ENCODE measurements at regions of chr2 and their contacts with region 1.

Region 1: GRCh38 chr2:196337208-196337953 is 166.0 kb upstream of the STK17B start:
- DNase-seq: peak; percentile 34
- ATAC-seq: peak; percentile 39
- H3K4me3 Mint-ChIP-seq: no peak overlapping the region
- H3K27ac Mint-ChIP-seq: no peak overlapping the region
- H3K4me1 Mint-ChIP-seq: peaks cover 4% of the 10 kb centered on the region
- H3K27me3 Mint-ChIP-seq: peaks cover 7% of the 10 kb centered on the region

Region 2: GRCh38 chr2:196068271-196069209 is 268.8 kb before region 1 on chr2 and contains the start of gene DNAH7:
- CTCF ChIA-PET with region 1: interaction called, 29 read pairs
- POLR2A ChIA-PET with region 1: no interaction called
- DNase-seq: peak; percentile 96
- ATAC-seq: peak; percentile 96
- H3K4me3 Mint-ChIP-seq: peak within 1 kb of the TSS; percentile 79
- H3K27ac Mint-ChIP-seq: peak within 1 kb of the TSS; percentile 75
- H3K4me1 Mint-ChIP-seq: peaks cover 19% of the 10 kb centered on the region
- H3K27me3 Mint-ChIP-seq: peaks cover 16% of the 10 kb centered on the region
- total RNA-seq, gene DNAH7: not detected

Region 3: DNA sequence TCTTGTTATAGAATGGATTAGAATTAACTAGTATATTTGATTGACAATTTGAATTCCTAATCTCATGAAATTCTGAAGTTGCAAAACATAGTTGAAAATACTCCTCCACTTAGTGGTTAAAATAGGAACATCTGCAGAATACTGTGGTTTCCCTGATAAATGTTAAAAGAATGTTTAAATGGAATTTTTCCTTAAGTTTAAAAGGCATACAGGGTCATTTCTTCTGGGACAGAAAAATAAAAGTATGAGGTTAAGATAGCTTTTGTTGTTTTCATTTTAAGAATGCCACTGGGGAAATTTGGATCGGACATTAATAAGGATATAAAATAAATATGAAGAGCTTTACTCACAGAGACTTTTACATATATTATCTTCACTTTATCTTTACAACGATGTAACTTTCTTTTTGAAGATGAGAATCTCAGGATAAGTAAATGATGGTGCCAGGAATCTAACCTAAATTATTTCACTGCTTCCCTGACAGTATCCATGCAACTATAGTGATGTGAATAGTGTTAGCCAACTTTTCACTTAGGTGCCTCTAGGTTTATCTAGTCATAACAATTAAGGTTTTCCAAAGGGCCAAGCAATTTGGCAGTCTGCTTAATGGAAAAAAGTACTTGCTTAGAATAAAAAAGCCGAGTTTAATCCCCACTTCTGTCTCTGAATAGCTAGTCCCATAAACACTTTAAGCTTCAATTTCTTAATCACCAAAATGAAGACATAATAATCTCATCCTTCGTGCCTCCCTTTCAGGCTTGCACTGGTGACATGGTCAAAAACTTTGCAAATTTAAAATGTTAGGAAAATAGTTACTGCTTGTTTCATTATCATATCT is 14.2 kb before region 1 on chr2:
- CTCF ChIA-PET with region 1: interaction called, 20 read pairs
- POLR2A ChIA-PET with region 1: no interaction called
- DNase-seq: no peak
- ATAC-seq: no peak
- H3K4me3 Mint-ChIP-seq: no peak overlapping the region
- H3K27ac Mint-ChIP-seq: no peak overlapping the region
- H3K4me1 Mint-ChIP-seq: no peaks in the 10 kb centered on the region
- H3K27me3 Mint-ChIP-seq: peaks cover 8% of the 10 kb centered on the region

Region 4: GRCh38 chr2:196356332-196356731 is 19.0 kb after region 1 on chr2:
- CTCF ChIA-PET with region 1: interaction called, 16 read pairs
- POLR2A ChIA-PET with region 1: no interaction called
- DNase-seq: no peak
- ATAC-seq: no peak
- H3K4me3 Mint-ChIP-seq: no peak overlapping the region
- H3K27ac Mint-ChIP-seq: no peak overlapping the region
- H3K4me1 Mint-ChIP-seq: peaks cover 2% of the 10 kb centered on the region
- H3K27me3 Mint-ChIP-seq: peaks cover 4% of the 10 kb centered on the region

Measured in activated CD8-positive, alpha-beta T cell treated with anti-CD3 and anti-CD28 coated beads, Interleukin-2, amount 10 ng/mL, durations not matched to agents 7 days and 5 days (primary cell).